Activated CD8-positive, alpha-beta T cell treated with anti-CD3 and anti-CD28 coated beads for 36 hours (primary cell): ENCODE measurements at regions of chr11 and their contacts with region 1.

Region 1: DNA sequence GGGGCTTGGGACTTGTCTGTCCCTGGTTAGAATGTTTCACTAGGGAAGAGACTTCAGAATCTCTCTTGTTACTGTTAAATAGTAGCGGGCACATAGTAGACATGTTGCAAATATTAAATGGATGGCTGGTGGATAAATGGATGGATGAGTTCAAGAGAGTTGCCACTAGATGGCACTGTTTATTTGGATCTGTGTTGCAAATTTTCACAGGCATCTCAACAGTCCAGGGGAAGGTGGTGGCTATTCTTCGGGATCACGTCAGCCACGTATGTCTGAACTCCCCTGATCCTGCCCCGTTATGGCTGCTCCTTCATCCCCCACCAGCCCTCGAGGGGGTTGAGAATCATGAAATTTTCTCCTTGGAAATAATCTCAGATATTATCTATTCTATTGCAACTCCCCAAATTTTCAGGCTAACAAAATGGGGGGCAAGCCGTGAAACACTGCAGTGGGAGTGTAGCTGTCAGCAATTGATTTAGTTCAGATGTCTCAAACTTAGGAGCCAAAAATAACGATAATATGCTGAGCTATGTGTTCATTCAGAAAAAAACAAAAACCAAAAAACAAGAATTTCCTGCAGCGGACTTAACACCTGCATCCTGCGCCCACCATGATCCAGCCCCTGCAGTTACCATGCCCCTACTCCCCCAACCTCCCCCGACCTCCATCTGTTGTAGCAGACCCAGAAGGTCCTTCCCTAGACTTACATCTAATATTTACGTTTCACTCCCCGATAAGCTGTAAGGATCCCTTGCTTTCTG is 29.1 kb upstream of the BIRC3 start:
- DNase-seq: peak; percentile 43
- ATAC-seq: peak; percentile 91
- H3K4me3 Mint-ChIP-seq: peak overlapping the region; percentile 53
- H3K27ac Mint-ChIP-seq: peak overlapping the region; percentile 25
- H3K4me1 Mint-ChIP-seq: peaks cover 19% of the 10 kb centered on the region
- H3K27me3 Mint-ChIP-seq: no peaks in the 10 kb centered on the region
- CTCF ChIP-seq: peak; percentile 72

Region 2: DNA sequence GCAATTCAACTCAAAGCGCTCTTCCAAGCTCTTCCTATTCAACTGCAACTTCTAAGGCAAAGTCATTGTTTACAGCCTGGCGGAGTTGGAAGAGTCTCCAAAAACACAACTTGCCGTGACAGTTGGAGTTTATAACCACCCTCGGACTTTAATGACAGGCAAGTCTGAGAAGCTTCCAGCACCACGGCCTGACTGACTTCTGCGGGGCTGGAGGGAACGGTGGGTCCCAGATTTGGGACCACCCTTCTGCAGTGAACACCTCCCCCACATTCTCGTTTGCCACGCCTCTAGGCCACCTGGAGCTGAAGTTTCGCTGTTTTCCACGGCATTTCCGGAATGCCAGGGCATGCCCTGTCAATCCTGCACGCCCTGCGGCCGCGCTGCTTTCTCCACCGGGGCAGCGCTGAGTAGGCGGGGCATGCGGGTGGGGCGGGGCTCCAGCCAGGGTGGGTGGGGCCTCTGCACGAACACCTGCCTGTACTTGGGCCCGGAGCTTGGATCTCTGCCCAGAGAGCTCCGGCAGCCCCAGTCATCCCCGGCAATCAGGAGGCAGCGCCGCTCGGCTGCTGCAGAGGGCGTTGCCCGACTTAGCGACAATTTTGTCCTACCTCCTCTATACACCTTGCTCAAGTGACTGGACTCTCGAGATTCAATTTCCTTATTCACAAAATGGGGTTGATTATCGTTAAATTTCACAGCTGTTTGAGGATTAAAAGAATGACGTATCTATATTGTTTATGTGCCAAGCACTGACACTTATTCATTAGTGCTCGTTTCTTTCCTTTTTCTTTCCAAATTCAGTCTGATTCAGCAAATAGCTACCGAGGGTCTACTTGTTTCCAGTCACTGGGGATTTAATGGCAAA is 19.6 kb before region 1 on chr11:
- CTCF ChIA-PET with region 1: interaction called, 20 read pairs
- POLR2A ChIA-PET with region 1: no interaction called
- intact Hi-C with region 1: no loop called
- DNase-seq: peak; percentile 87
- ATAC-seq: peak; percentile 99
- H3K4me3 Mint-ChIP-seq: peak overlapping the region; percentile 68
- H3K27ac Mint-ChIP-seq: no peak overlapping the region
- H3K4me1 Mint-ChIP-seq: peaks cover 19% of the 10 kb centered on the region
- H3K27me3 Mint-ChIP-seq: peaks cover 15% of the 10 kb centered on the region
- CTCF ChIP-seq: peak; percentile 66

Region 3: GRCh38 chr11:102317099-102317767 is 29.1 kb after region 1 on chr11 and contains the start of gene BIRC3:
- CTCF ChIA-PET with region 1: interaction called, 403 read pairs
- POLR2A ChIA-PET with region 1: interaction called, 10 read pairs
- intact Hi-C with region 1: loop called (anchors 2 kb)
- DNase-seq: peak; percentile 98
- ATAC-seq: peak; percentile 87
- H3K4me3 Mint-ChIP-seq: peak within 1 kb of the TSS; percentile 100
- H3K27ac Mint-ChIP-seq: peak within 1 kb of the TSS; percentile 99
- H3K4me1 Mint-ChIP-seq: peaks cover 62% of the 10 kb centered on the region
- H3K27me3 Mint-ChIP-seq: no peaks in the 10 kb centered on the region
- CTCF ChIP-seq: no peak
- total RNA-seq, gene BIRC3: 102 to 108 TPM

Region 4: GRCh38 chr11:102346748-102347461 is 58.8 kb after region 1 on chr11 and contains the start of gene BIRC2:
- CTCF ChIA-PET with region 1: interaction called, 204 read pairs
- POLR2A ChIA-PET with region 1: no interaction called
- intact Hi-C with region 1: no loop called
- DNase-seq: peak; percentile 95
- ATAC-seq: peak; percentile 94
- H3K4me3 Mint-ChIP-seq: peak within 1 kb of the TSS; percentile 90
- H3K27ac Mint-ChIP-seq: peak within 1 kb of the TSS; percentile 95
- H3K4me1 Mint-ChIP-seq: peaks cover 36% of the 10 kb centered on the region
- H3K27me3 Mint-ChIP-seq: no peaks in the 10 kb centered on the region
- CTCF ChIP-seq: peak; percentile 69
- total RNA-seq, gene BIRC2: 29.8 to 32.9 TPM

Region 5: DNA sequence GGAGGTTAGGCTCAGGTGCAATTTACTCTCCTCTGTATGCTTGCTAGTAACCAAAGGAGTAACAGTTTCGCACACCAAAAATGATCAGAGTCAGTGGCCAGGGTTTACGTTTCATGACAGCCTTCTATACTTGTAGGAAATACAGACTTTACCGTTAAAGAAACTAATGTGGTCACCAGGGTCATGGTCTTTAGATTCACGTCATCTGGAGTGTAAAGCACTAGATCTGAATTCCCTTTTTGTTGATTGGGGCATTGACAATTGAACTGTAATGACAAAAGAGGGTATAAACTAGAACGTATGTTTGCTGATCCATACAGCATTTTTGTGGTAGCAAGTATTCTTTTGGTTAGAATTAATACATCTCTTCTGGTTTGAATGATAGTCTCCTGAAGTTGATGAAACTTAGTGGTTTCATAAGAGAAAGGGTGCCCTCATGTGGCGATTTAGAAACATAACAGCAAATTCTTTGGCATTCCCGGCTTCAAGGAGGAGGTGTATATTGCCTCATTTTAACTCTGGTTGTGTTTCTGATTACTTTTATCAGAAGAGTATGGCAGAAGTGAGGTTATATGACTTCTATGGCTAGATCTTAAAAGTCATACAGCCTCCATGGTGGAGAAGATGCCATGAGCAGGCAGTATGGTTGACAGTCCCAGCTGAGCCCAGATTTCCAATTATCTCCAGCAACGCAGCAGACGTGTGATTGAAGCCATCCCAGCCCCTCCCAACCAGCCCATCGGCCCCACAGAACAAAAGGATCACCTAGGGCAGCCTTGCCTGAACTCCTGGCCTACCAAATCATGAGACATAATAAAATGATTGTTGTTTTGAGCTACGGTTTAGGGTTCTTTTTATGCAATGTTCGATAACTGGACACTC is 207.3 kb after region 1 on chr11:
- CTCF ChIA-PET with region 1: interaction called, 18 read pairs
- POLR2A ChIA-PET with region 1: no interaction called
- intact Hi-C with region 1: loop called (anchors 5 kb)
- DNase-seq: peak; percentile 51
- ATAC-seq: peak; percentile 68
- H3K4me3 Mint-ChIP-seq: no peak overlapping the region
- H3K27ac Mint-ChIP-seq: peak overlapping the region; percentile 14
- H3K4me1 Mint-ChIP-seq: peaks cover 23% of the 10 kb centered on the region
- H3K27me3 Mint-ChIP-seq: peaks cover 1% of the 10 kb centered on the region
- CTCF ChIP-seq: peak; percentile 92